Right ventricle myocardium inferior (tissue), 1 donor: ENCODE measurements at regions of chr2 and their contacts with region 1.

Region 1: GRCh38 chr2:13050764-13051163 is 334.0 kb downstream of the TRIB2 start:
- DNase-seq: no peak
- ATAC-seq: no peak

Region 2: GRCh38 chr2:12948961-12949353 is 101.8 kb before region 1 on chr2:
- intact Hi-C with region 1: no loop called
- DNase-seq: no peak
- ATAC-seq: no peak

Region 3: DNA sequence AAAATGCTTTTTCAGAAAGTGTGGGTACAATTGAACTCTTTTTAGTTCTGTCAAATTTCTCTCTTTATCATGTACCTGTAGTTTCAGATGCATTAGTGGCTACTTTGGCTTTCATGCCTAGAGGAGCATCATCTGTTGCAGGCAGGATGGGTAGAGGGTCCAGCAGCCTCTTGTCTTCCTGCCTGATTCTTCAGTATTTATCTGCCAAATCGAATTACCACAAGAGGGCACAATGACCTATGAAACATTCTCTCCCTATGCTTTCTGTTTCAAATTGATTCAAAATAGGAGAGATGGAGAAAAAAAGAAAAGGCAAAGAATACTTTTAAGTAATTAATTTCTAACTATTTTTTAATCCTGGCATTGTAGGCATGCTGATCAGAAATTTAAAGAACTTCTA is 143.1 kb after region 1 on chr2:
- intact Hi-C with region 1: loop called (anchors 5 kb)
- DNase-seq: no peak
- ATAC-seq: no peak